AG04450 (cell line): ENCODE measurements at regions of chr6 and their contacts with region 1.

Region 1: GRCh38 chr6:70221025-70221714 is 81.7 kb downstream of the COL9A1 start:
- DNase-seq: no peak
- H3K4me3 ChIP-seq: no peak overlapping the region
- H3K27ac ChIP-seq: no peak overlapping the region
- H3K27me3 ChIP-seq: no peaks in the 10 kb centered on the region
- CTCF ChIP-seq: peak; percentile 69

Region 2: GRCh38 chr6:70210462-70210861 is 10.7 kb before region 1 on chr6:
- CTCF ChIA-PET with region 1: interaction called, 18 read pairs
- POLR2A ChIA-PET with region 1: no interaction called
- DNase-seq: no peak
- H3K4me3 ChIP-seq: no peak overlapping the region
- H3K27ac ChIP-seq: no peak overlapping the region
- H3K27me3 ChIP-seq: no peaks in the 10 kb centered on the region
- CTCF ChIP-seq: peak; percentile 35

Region 3: GRCh38 chr6:70241991-70242420 is 20.8 kb after region 1 on chr6:
- CTCF ChIA-PET with region 1: interaction called, 23 read pairs
- POLR2A ChIA-PET with region 1: no interaction called
- DNase-seq: no peak
- H3K4me3 ChIP-seq: no peak overlapping the region
- H3K27ac ChIP-seq: no peak overlapping the region
- H3K27me3 ChIP-seq: no peaks in the 10 kb centered on the region
- CTCF ChIP-seq: no peak

Region 4: GRCh38 chr6:70289299-70289698 is 68.1 kb after region 1 on chr6:
- CTCF ChIA-PET with region 1: interaction called, 18 read pairs
- POLR2A ChIA-PET with region 1: no interaction called
- DNase-seq: no peak
- H3K4me3 ChIP-seq: no peak overlapping the region
- H3K27ac ChIP-seq: no peak overlapping the region
- H3K27me3 ChIP-seq: no peaks in the 10 kb centered on the region
- CTCF ChIP-seq: no peak

Region 5: GRCh38 chr6:70363741-70364493 is 142.7 kb after region 1 on chr6:
- CTCF ChIA-PET with region 1: interaction called, 106 read pairs
- POLR2A ChIA-PET with region 1: no interaction called
- DNase-seq: no peak
- H3K4me3 ChIP-seq: no peak overlapping the region
- H3K27ac ChIP-seq: no peak overlapping the region
- H3K27me3 ChIP-seq: peaks cover 26% of the 10 kb centered on the region
- CTCF ChIP-seq: no peak

Region 6: DNA sequence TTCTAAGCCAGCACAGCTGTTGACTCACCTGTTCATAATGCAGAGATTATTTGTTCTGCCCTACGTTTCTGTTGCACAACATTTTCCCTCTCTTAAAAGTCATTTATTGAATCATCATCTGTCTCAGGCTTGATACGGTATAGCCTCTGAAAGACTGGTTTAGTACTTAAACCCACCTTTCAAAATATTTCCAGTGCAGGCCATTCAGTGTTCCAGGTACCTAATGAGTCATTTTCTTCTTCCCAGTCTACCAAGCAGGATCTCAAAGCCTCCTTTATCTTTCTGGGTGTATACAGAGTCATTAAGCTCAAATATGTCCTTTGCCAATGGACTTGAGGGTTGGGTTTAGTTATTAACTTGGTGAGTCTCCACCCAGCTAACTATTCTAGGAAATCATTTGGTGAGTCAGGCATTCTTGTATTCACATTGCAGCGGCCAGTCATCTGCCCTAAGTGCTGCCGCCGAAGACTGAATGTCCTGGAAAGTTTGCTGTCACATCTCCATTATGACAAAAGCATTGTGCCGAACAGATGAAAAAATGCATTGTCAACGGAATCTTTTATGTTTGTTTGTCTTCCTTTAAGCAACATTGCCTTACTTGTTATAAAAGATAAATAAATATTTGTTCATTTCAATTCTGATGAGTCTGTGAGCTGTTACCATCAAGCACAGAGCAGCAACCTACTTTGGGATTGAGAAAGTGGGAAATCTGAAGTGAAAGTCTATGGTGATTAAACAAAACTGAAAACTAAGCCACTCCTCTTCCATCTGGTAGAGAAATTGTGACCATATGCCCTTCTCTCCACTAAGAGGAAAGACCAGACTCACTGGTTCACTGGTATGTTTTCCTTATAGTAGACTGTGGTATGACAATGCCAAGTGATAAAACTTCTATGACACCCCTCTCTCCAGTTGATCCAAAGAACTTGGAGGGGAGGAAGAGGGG is 177.9 kb after region 1 on chr6:
- CTCF ChIA-PET with region 1: no interaction called
- POLR2A ChIA-PET with region 1: no interaction called
- DNase-seq: no peak
- H3K4me3 ChIP-seq: no peak overlapping the region
- H3K27ac ChIP-seq: no peak overlapping the region
- H3K27me3 ChIP-seq: no peaks in the 10 kb centered on the region
- CTCF ChIP-seq: no peak

Region 7: DNA sequence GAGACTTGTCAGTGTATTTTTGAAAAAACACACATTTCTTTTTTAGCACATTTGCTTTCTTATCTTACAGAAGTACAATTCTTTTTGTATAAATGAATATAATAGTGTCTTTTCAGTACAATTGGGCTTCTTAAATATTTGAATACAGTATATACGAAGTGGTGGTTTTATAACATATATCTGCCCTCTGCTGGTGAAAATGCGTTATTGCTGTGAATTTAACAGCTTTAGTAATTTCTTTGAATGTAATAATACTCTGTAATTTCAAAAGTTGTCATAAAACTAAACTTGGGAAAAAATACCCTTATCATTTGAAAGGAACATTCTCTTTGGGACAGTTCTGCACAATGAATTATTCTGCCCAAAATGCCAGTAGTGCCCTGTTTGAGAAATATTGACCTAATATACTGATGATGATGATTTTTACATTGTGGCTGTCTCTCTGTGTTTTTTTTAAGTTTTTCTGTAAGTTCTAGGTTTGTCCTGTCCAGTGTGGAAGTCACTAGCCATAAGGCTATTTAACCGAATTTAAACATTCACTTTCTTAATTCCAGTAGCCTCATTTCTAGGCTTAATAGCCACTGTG is 465.5 kb after region 1 on chr6:
- CTCF ChIA-PET with region 1: interaction called, 20 read pairs
- POLR2A ChIA-PET with region 1: no interaction called
- DNase-seq: no peak
- H3K4me3 ChIP-seq: no peak overlapping the region
- H3K27ac ChIP-seq: no peak overlapping the region
- H3K27me3 ChIP-seq: no peaks in the 10 kb centered on the region
- CTCF ChIP-seq: peak; percentile 64

Region 8: GRCh38 chr6:70955441-70956190 is 734.4 kb after region 1 on chr6:
- CTCF ChIA-PET with region 1: interaction called, 10 read pairs
- POLR2A ChIA-PET with region 1: no interaction called
- DNase-seq: peak; percentile 27
- H3K4me3 ChIP-seq: peak overlapping the region; percentile 49
- H3K27ac ChIP-seq: no peak overlapping the region
- H3K27me3 ChIP-seq: peaks cover 48% of the 10 kb centered on the region
- CTCF ChIP-seq: peak; percentile 78